CD8-positive, alpha-beta memory T cell (primary cell): ENCODE measurements at regions of chr19 and their contacts with region 1.

Region 1: GRCh38 chr19:40425450-40426287 is at the start of gene SERTAD1:
- DNase-seq: peak; percentile 100
- H3K4me3 ChIP-seq: peak within 1 kb of the TSS; percentile 97
- H3K4me3 Mint-ChIP-seq: peak within 1 kb of the TSS; percentile 90 to 99 (median 96)
- H3K27ac ChIP-seq: peak within 1 kb of the TSS; percentile 90
- H3K27ac Mint-ChIP-seq: peak within 1 kb of the TSS; percentile 94 to 100 (median 98)
- H3K4me1 ChIP-seq: peaks cover 20% of the 10 kb centered on the region
- H3K4me1 Mint-ChIP-seq: peaks cover 25 to 33% (median 31%) of the 10 kb centered on the region in 3 donors
- H3K27me3 ChIP-seq: no peaks in the 10 kb centered on the region
- H3K27me3 Mint-ChIP-seq: peaks cover 0 to 5% of the 10 kb centered on the region in 2 donors
- total RNA-seq, gene SERTAD1: 15.9 to 17.8 TPM

Region 2: GRCh38 chr19:40285353-40286234 is 140.1 kb before region 1 on chr19:
- CTCF ChIA-PET with region 1: no interaction called
- POLR2A ChIA-PET with region 1: no interaction called
- DNase-seq: peak; percentile 96 to 100 (median 99)
- H3K4me3 ChIP-seq: peak overlapping the region; percentile 85
- H3K4me3 Mint-ChIP-seq: peak overlapping the region; percentile 80 to 97 (median 92)
- H3K27ac ChIP-seq: peak overlapping the region; percentile 94
- H3K27ac Mint-ChIP-seq: peak overlapping the region; percentile 92 to 100 (median 99)
- H3K4me1 ChIP-seq: peaks cover 43% of the 10 kb centered on the region
- H3K4me1 Mint-ChIP-seq: peaks cover 41 to 54% (median 49%) of the 10 kb centered on the region in 3 donors
- H3K27me3 ChIP-seq: no peaks in the 10 kb centered on the region
- H3K27me3 Mint-ChIP-seq: peaks cover 0 to 2% of the 10 kb centered on the region in 2 donors

Region 3: DNA sequence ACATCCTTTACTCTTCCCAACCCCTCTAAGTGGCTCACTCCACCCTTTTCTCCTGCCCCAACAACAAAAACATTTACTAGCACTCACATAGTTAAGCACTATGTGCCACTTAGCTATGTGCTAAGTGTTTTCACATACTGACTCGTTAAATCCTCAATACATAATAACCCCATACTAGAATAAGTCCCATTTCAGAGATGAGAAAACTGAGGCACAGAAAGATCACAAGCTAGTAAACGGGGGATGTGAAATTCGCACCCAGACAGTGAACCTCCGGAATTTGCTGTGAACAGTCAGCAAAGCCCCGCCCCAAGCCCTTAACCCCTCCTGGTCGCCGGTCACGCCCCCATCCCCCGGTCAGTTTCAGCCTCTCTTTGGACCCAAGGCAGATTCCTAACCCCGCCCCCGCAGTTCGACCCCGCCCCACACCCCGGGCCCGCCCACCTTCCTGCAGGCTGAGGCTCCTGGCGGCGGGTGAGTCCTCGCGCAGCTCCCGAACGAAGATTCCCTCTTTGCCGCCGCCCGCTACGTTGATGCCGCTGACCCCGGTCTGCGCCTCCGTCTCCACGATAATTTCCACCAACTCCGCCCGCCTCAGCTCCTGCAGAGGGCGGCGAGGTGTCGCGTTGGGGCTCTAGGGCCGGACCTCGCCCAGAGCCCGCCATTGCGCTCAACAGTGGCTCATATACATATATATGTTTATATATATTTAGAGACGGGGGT is 22.2 kb before region 1 on chr19:
- CTCF ChIA-PET with region 1: interaction called, 18 read pairs
- POLR2A ChIA-PET with region 1: interaction called, 7 read pairs
- DNase-seq: peak; percentile 64 to 82 (median 77)
- H3K4me3 ChIP-seq: peak overlapping the region; percentile 80
- H3K4me3 Mint-ChIP-seq: peak overlapping the region; percentile 78 to 99 (median 95)
- H3K27ac ChIP-seq: peak overlapping the region; percentile 65
- H3K27ac Mint-ChIP-seq: peak overlapping the region; percentile 8 to 93 (median 91)
- H3K4me1 ChIP-seq: peaks cover 5% of the 10 kb centered on the region
- H3K4me1 Mint-ChIP-seq: peaks cover 15 to 25% (median 25%) of the 10 kb centered on the region in 3 donors
- H3K27me3 ChIP-seq: no peaks in the 10 kb centered on the region
- H3K27me3 Mint-ChIP-seq: peaks cover 2 to 5% of the 10 kb centered on the region in 2 donors

Region 4: GRCh38 chr19:40444192-40445028 is 18.7 kb after region 1 on chr19 and contains the start of gene SERTAD3:
- CTCF ChIA-PET with region 1: interaction called, 24 read pairs
- POLR2A ChIA-PET with region 1: interaction called, 27 read pairs
- DNase-seq: peak; percentile 95 to 98 (median 97)
- H3K4me3 ChIP-seq: peak within 1 kb of the TSS; percentile 100
- H3K4me3 Mint-ChIP-seq: peak within 1 kb of the TSS; percentile 93 to 100 (median 98)
- H3K27ac ChIP-seq: peak within 1 kb of the TSS; percentile 98
- H3K27ac Mint-ChIP-seq: peak within 1 kb of the TSS; percentile 88 to 100 (median 98)
- H3K4me1 ChIP-seq: peaks cover 14% of the 10 kb centered on the region
- H3K4me1 Mint-ChIP-seq: peaks cover 15 to 24% (median 17%) of the 10 kb centered on the region in 3 donors
- H3K27me3 ChIP-seq: no peaks in the 10 kb centered on the region
- H3K27me3 Mint-ChIP-seq: peaks cover 0 to 5% of the 10 kb centered on the region in 2 donors
- total RNA-seq, gene SERTAD3: 7.0 to 8.5 TPM